ENCODE measurements at regions of chr4 and their contacts with region 1.

Region 1: DNA sequence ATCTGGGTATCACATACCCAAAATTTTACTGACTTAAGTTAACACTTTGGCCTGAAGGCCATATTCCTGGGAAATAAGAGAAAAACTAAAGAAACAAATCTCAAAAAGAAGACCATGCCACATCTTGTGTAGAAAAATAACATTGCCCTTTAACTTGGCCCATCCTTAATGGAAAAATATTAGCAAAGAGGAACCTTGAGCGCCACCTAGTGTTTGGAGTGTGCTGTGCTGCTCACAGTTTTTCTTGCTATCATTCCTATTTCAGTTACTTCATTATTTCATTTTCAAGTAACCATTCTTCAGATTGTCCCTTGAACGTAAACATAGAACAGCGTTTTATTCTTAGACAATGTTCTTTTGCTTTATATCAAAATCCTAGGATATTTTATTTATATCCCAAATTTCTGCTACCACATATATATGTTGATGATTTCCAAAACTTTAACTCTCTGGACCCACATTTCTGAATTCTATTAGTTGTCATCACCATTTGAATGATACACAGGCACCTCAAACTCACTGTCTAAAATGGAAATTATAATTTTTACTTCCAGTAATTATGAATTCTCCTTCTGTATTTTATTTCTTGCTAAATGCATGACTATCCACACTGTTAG is 999.0 kb upstream of the ADGRL3 start:
- DNase-seq: peak; percentile 47
- ATAC-seq: no peak
- H3K4me3 ChIP-seq: no peak overlapping the region
- H3K4me3 Mint-ChIP-seq: no peak overlapping the region
- H3K27ac ChIP-seq: no peak overlapping the region
- H3K27ac Mint-ChIP-seq: no peak overlapping the region
- H3K4me1 ChIP-seq: no peaks in the 10 kb centered on the region
- H3K4me1 Mint-ChIP-seq: no peaks in the 10 kb centered on the region
- H3K27me3 ChIP-seq: no peaks in the 10 kb centered on the region
- H3K27me3 Mint-ChIP-seq: no peaks in the 10 kb centered on the region
- CTCF ChIP-seq: peak; percentile 90

Region 2: DNA sequence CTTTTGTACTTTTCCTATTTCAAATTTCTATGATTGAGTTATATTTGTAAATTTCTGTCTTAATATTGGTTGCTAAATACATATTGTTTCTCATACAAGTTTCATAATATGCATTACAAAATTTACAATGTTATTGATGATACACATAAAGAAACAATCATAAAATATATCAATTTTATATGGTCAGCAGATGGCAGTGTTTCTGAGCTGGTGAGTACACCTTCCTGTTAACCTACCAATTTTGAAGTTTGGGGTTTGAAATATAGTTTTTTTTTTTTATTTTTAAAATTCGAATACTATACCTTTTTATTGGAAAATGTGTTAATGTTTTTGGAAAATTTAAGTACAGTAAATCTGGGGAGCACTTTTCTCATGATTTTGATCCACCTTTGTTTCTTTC is 954.1 kb before region 1 on chr4:
- CTCF ChIA-PET with region 1: no interaction called
- POLR2A ChIA-PET with region 1: no interaction called
- intact Hi-C with region 1: loop called (anchors 5 kb)
- DNase-seq: no peak
- ATAC-seq: no peak
- H3K4me3 ChIP-seq: no peak overlapping the region
- H3K4me3 Mint-ChIP-seq: no peak overlapping the region
- H3K27ac ChIP-seq: no peak overlapping the region
- H3K27ac Mint-ChIP-seq: no peak overlapping the region
- H3K4me1 ChIP-seq: no peaks in the 10 kb centered on the region
- H3K4me1 Mint-ChIP-seq: no peaks in the 10 kb centered on the region
- H3K27me3 ChIP-seq: no peaks in the 10 kb centered on the region
- H3K27me3 Mint-ChIP-seq: no peaks in the 10 kb centered on the region
- CTCF ChIP-seq: no peak

Region 3: DNA sequence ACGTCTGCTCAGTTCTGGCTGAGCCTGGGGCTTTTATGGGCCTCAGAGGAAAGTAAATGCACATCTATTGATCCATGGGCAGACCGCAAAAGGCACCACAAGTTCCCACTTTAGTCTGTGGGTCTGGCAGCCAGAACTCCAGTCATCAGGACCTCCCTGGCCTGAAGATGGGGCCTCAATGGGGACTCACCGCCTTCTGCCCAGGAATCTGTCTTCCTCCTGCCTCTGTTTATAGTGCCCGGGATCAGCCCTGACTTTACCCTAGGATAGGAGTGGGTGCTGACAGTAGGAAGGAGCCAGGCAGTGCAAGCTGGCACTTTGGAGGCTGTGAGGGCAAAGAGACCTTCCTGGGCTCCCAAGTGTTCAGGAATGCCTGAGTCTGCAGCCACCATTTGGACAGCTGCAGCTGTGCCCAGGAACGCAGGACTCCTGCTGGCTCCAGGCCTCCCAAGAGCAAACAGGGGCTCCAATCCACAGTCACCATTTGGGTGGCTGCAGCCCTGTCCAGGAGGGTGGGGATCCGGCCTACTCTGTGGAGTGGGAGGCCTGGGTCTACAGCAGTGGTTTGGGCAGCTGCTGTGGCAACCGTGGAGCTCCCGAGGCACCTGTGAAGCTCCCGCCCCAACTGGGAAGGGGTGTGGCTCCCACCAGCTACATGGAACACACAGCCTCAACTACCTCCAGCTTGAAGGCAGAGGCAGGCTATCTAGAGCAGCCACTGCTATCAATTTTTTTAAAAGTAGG is 441.9 kb before region 1 on chr4:
- CTCF ChIA-PET with region 1: no interaction called
- POLR2A ChIA-PET with region 1: no interaction called
- intact Hi-C with region 1: no loop called
- DNase-seq: no peak
- ATAC-seq: no peak
- H3K4me3 ChIP-seq: no peak overlapping the region
- H3K4me3 Mint-ChIP-seq: no peak overlapping the region
- H3K27ac ChIP-seq: no peak overlapping the region
- H3K27ac Mint-ChIP-seq: no peak overlapping the region
- H3K4me1 ChIP-seq: no peaks in the 10 kb centered on the region
- H3K4me1 Mint-ChIP-seq: no peaks in the 10 kb centered on the region
- H3K27me3 ChIP-seq: no peaks in the 10 kb centered on the region
- H3K27me3 Mint-ChIP-seq: no peaks in the 10 kb centered on the region
- CTCF ChIP-seq: no peak

Region 4: DNA sequence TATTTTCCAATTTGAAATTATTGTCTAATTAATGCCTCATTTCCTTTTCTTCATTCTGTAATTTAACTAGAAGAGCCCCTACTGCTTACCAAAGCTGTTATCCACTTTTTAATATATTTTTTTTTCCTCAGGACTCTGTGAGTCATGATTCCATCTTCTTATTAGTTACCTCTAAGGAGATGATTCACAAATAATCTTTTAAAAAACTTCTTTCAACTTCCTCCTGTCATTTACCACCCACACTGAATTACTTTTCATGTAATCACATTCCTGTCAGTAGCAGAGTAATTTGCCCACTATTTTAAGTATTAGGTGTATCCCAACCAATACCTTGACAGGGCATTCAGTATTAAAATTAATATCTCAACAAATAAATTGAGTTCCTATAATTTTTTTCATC is 528.0 kb after region 1 on chr4:
- CTCF ChIA-PET with region 1: no interaction called
- POLR2A ChIA-PET with region 1: no interaction called
- intact Hi-C with region 1: no loop called
- DNase-seq: no peak
- ATAC-seq: no peak
- H3K4me3 ChIP-seq: no peak overlapping the region
- H3K4me3 Mint-ChIP-seq: no peak overlapping the region
- H3K27ac ChIP-seq: no peak overlapping the region
- H3K27ac Mint-ChIP-seq: no peak overlapping the region
- H3K4me1 ChIP-seq: no peaks in the 10 kb centered on the region
- H3K4me1 Mint-ChIP-seq: no peaks in the 10 kb centered on the region
- H3K27me3 ChIP-seq: no peaks in the 10 kb centered on the region
- H3K27me3 Mint-ChIP-seq: no peaks in the 10 kb centered on the region
- CTCF ChIP-seq: no peak

Measured in B cell (primary cell).